ENCODE measurements at regions of chr14 and their contacts with region 1.

Region 1: GRCh38 chr14:29521526-29522137 is 406.0 kb downstream of the PRKD1 start:
- DNase-seq: no peak
- H3K4me3 ChIP-seq: no peak overlapping the region
- H3K27ac ChIP-seq: no peak overlapping the region
- H3K4me1 ChIP-seq: no peaks in the 10 kb centered on the region
- H3K27me3 ChIP-seq: no peaks in the 10 kb centered on the region
- CTCF ChIP-seq: peak; percentile 39; the same call in 1 of the 2 replicates

Region 2: GRCh38 chr14:29028973-29029582 is 492.6 kb before region 1 on chr14:
- CTCF ChIA-PET with region 1: no interaction called
- POLR2A ChIA-PET with region 1: no interaction called
- intact Hi-C with region 1: loop called (anchors 10 kb)
- DNase-seq: no peak
- H3K4me3 ChIP-seq: no peak overlapping the region
- H3K27ac ChIP-seq: no peak overlapping the region
- H3K4me1 ChIP-seq: no peaks in the 10 kb centered on the region
- H3K27me3 ChIP-seq: no peaks in the 10 kb centered on the region
- CTCF ChIP-seq: no peak

Region 3: DNA sequence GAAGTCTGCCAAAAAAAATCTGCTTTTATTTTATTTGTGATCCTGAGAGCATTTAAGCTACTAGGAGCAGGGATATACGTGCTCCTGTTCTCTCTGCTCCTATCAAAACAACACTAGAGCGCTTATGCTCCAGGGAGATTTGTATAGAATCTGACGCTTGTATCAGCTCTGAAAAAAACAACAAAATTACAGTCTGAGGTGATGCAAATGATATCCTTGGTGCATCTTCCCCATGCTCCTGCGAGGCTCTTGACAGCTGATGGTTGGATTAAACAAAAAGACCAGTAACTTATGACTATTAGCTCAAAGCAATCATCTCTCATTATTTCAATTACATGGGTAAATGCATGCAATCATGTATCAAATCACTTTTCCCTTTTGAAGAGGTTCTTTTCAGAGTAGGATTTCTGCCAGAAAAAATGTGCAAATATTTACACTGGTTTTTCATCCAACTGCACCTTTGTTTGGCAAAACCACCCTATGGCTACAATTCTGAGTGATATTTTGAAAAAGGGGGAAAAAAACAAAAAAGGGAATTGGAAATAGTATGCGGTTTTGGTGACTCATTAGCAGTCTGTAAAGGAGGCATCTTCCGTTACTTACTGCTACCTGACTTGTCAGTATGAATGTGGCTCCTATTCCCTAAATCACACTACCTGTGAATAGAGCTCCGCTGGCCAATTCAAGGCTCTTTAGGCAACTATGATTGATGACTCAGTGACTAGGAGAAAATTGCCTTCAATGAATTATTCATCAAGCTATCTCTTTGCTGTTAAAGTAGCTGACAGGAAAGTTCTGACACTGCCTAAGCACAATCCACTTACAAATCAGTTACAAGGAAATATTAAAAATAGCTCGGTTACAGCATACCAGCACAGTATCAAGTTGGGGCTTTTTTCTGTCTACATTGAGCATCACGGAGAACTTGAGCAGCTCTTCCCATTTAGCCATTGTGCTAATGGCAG is 305.1 kb before region 1 on chr14:
- CTCF ChIA-PET with region 1: no interaction called
- POLR2A ChIA-PET with region 1: no interaction called
- intact Hi-C with region 1: loop called (anchors 10 kb)
- DNase-seq: no peak
- H3K4me3 ChIP-seq: no peak overlapping the region
- H3K27ac ChIP-seq: no peak overlapping the region
- H3K4me1 ChIP-seq: no peaks in the 10 kb centered on the region
- H3K27me3 ChIP-seq: no peaks in the 10 kb centered on the region
- CTCF ChIP-seq: no peak

Region 4: GRCh38 chr14:29503903-29504302 is 17.7 kb before region 1 on chr14:
- CTCF ChIA-PET with region 1: no interaction called
- POLR2A ChIA-PET with region 1: no interaction called
- intact Hi-C with region 1: no loop called
- DNase-seq: no peak
- H3K4me3 ChIP-seq: no peak overlapping the region
- H3K27ac ChIP-seq: no peak overlapping the region
- H3K4me1 ChIP-seq: no peaks in the 10 kb centered on the region
- H3K27me3 ChIP-seq: no peaks in the 10 kb centered on the region
- CTCF ChIP-seq: no peak

Region 5: GRCh38 chr14:29681316-29681715 is 159.7 kb after region 1 on chr14:
- CTCF ChIA-PET with region 1: no interaction called
- POLR2A ChIA-PET with region 1: no interaction called
- intact Hi-C with region 1: no loop called
- DNase-seq: no peak
- H3K4me3 ChIP-seq: no peak overlapping the region
- H3K27ac ChIP-seq: no peak overlapping the region
- H3K4me1 ChIP-seq: no peaks in the 10 kb centered on the region
- H3K27me3 ChIP-seq: no peaks in the 10 kb centered on the region
- CTCF ChIP-seq: no peak

Measured in PC-9 (cell line).